ENCODE measurements at regions of chr4 and their contacts with region 1.

Region 1: GRCh38 chr4:24213961-24214360 is 324.1 kb upstream of the PPARGC1A start:
- DNase-seq: no peak
- H3K4me3 ChIP-seq: no peak overlapping the region
- H3K27ac ChIP-seq: no peak overlapping the region
- H3K4me1 ChIP-seq: no peaks in the 10 kb centered on the region
- H3K27me3 ChIP-seq: no peaks in the 10 kb centered on the region
- CTCF ChIP-seq: no peak
- POLR2A ChIP-seq: no peak

Region 2: DNA sequence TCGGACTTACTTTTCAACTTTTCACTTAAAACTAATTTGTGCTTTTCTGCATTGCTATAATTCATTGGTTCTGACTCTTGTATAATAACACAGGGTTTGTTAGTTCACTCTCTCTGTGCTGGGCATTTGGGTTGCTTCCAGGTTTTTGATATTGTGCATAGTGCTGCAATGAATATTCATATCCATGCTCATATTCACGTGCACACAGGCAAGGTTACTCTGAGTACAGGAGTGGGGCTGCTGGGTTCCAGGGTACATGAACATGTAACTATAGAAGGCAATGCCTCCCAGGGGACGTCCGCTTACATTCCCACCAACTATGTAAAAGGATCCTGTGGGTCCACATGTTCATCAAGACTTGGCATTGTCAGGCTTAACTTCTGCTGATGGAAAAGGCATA is 1815.3 kb before region 1 on chr4:
- intact Hi-C with region 1: no loop called
- DNase-seq: no peak
- H3K4me3 ChIP-seq: no peak overlapping the region
- H3K27ac ChIP-seq: no peak overlapping the region
- H3K4me1 ChIP-seq: no peaks in the 10 kb centered on the region
- H3K27me3 ChIP-seq: no peaks in the 10 kb centered on the region
- CTCF ChIP-seq: no peak
- POLR2A ChIP-seq: no peak

Region 3: GRCh38 chr4:23438764-23439163 is 775.2 kb before region 1 on chr4:
- intact Hi-C with region 1: no loop called
- DNase-seq: no peak
- H3K4me3 ChIP-seq: no peak overlapping the region
- H3K27ac ChIP-seq: no peak overlapping the region
- H3K4me1 ChIP-seq: no peaks in the 10 kb centered on the region
- H3K27me3 ChIP-seq: no peaks in the 10 kb centered on the region
- CTCF ChIP-seq: no peak
- POLR2A ChIP-seq: no peak

Region 4: DNA sequence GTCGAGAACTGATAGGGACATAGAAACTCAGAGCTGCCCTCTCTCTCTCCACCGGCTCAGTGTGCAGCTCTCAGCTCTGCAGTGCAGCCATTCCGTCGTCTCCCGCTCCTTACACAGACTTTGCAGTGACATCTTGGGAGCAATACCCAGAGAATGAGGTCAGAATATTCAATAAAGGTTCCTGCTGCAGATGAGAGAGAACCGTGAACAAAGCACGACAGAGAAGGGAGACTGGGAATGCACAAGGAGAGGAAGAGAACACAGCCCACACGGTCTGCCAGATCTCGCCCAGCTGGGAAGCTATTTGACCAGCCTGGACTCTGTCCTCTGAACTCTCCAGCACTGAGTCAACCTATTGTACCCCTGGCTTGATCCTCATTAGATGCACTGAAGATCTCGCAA is 206.1 kb before region 1 on chr4:
- intact Hi-C with region 1: no loop called
- DNase-seq: no peak
- H3K4me3 ChIP-seq: no peak overlapping the region
- H3K27ac ChIP-seq: no peak overlapping the region
- H3K4me1 ChIP-seq: no peaks in the 10 kb centered on the region
- H3K27me3 ChIP-seq: no peaks in the 10 kb centered on the region
- CTCF ChIP-seq: no peak
- POLR2A ChIP-seq: no peak

Region 5: GRCh38 chr4:24282446-24282845 is 68.5 kb after region 1 on chr4:
- intact Hi-C with region 1: loop called (anchors 2 kb)
- DNase-seq: no peak
- H3K4me3 ChIP-seq: no peak overlapping the region
- H3K27ac ChIP-seq: no peak overlapping the region
- H3K4me1 ChIP-seq: no peaks in the 10 kb centered on the region
- H3K27me3 ChIP-seq: no peaks in the 10 kb centered on the region
- CTCF ChIP-seq: no peak
- POLR2A ChIP-seq: no peak

Measured in breast epithelium (tissue), 4 donors.